IMR-90 (cell line): ENCODE measurements at regions of chr12 and their contacts with region 1.

Region 1: GRCh38 chr12:12266873-12267741 is at the start of gene LRP6:
- DNase-seq: peak; percentile 94
- ATAC-seq: peak; percentile 94
- H3K4me3 ChIP-seq: peak within 1 kb of the TSS; percentile 85
- H3K27ac ChIP-seq: peak within 1 kb of the TSS; percentile 97
- H3K4me1 ChIP-seq: peaks cover 3% of the 10 kb centered on the region
- H3K27me3 ChIP-seq: no peaks in the 10 kb centered on the region
- CTCF ChIP-seq: no peak
- POLR2A ChIP-seq: peak; percentile 94
- RAD21 ChIP-seq: no peak
- total RNA-seq, gene LRP6: 32.1 and 41.4 TPM in 2 replicates

Region 2: GRCh38 chr12:12081836-12082497 is 185.1 kb before region 1 on chr12:
- CTCF ChIA-PET with region 1: no interaction called
- POLR2A ChIA-PET with region 1: interaction called, 3 read pairs
- dilution Hi-C with region 1: no loop called
- in situ Hi-C with region 1: no loop called
- intact Hi-C with region 1: loop called (anchors 5 kb)
- DNase-seq: peak; percentile 55
- ATAC-seq: peak; percentile 75
- H3K4me3 ChIP-seq: no peak overlapping the region
- H3K27ac ChIP-seq: no peak overlapping the region
- H3K4me1 ChIP-seq: peaks cover 3% of the 10 kb centered on the region
- H3K27me3 ChIP-seq: no peaks in the 10 kb centered on the region
- CTCF ChIP-seq: peak; percentile 46
- POLR2A ChIP-seq: no peak
- RAD21 ChIP-seq: peak; percentile 56

Region 3: GRCh38 chr12:12141000-12141399 is 126.1 kb before region 1 on chr12:
- CTCF ChIA-PET with region 1: no interaction called
- POLR2A ChIA-PET with region 1: no interaction called
- dilution Hi-C with region 1: no loop called
- in situ Hi-C with region 1: no loop called
- intact Hi-C with region 1: loop called (anchors 5 kb)
- DNase-seq: no peak
- ATAC-seq: no peak
- H3K4me3 ChIP-seq: no peak overlapping the region
- H3K27ac ChIP-seq: no peak overlapping the region
- H3K4me1 ChIP-seq: no peaks in the 10 kb centered on the region
- H3K27me3 ChIP-seq: no peaks in the 10 kb centered on the region
- CTCF ChIP-seq: no peak
- POLR2A ChIP-seq: no peak
- RAD21 ChIP-seq: no peak

Region 4: DNA sequence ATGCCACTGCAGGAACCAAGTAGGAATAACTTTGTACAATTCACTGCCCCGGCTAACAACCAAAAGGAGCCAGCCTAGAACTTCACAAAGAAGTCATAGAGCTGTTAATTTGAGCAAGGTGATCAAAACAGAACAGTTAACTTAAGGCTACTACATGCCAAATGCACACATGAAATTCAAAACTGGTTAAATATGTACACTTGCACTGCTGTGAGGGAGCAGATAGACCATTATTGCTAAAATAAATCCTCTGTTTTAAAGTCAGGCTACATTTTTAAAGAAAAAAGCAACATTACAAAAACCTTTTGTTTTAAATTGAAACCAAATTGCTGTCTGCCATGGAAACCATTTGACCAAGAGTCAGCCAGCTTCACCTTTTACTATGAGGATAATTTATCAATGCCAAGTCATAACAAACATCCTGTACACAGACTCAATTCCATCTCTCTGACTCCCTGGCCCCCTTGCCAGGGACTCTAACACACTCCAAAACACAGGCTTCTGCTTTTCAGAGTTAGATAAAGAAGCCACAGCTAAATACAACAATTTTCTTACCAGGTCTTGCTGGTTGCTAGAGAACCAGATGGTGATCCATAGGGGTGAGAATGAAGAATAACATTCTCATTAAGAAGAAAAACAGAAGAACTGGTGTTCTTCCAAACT is 84.3 kb before region 1 on chr12:
- CTCF ChIA-PET with region 1: no interaction called
- POLR2A ChIA-PET with region 1: no interaction called
- dilution Hi-C with region 1: no loop called
- in situ Hi-C with region 1: no loop called
- intact Hi-C with region 1: loop called (anchors 5 kb)
- DNase-seq: peak; percentile 86
- ATAC-seq: peak; percentile 75
- H3K4me3 ChIP-seq: no peak overlapping the region
- H3K27ac ChIP-seq: no peak overlapping the region
- H3K4me1 ChIP-seq: peaks cover 9% of the 10 kb centered on the region; the same call in 1 of the 2 replicates
- H3K27me3 ChIP-seq: no peaks in the 10 kb centered on the region
- CTCF ChIP-seq: no peak
- POLR2A ChIP-seq: no peak
- RAD21 ChIP-seq: no peak

Region 5: GRCh38 chr12:12334367-12335040 is 67.4 kb after region 1 on chr12:
- CTCF ChIA-PET with region 1: interaction called, 3 read pairs
- POLR2A ChIA-PET with region 1: no interaction called
- dilution Hi-C with region 1: no loop called
- in situ Hi-C with region 1: no loop called
- intact Hi-C with region 1: loop called (anchors 5 kb)
- DNase-seq: peak; percentile 46
- ATAC-seq: peak; percentile 30; the same call in 1 of the 2 replicates
- H3K4me3 ChIP-seq: no peak overlapping the region
- H3K27ac ChIP-seq: no peak overlapping the region
- H3K4me1 ChIP-seq: peaks cover 2% of the 10 kb centered on the region; the same call in 1 of the 2 replicates
- H3K27me3 ChIP-seq: 0 out of 2 replicates have a peak, but pooled peaks cover 2% of the 10 kb centered on the region
- CTCF ChIP-seq: peak; percentile 74
- POLR2A ChIP-seq: no peak
- RAD21 ChIP-seq: peak; percentile 60